ENCODE measurements at regions of chr9 and their contacts with region 1.

Region 1: GRCh38 chr9:95201206-95201605 is 116.3 kb downstream of the FANCC start:
- DNase-seq: no peak
- H3K4me3 Mint-ChIP-seq: no peak overlapping the region
- H3K27ac Mint-ChIP-seq: peak overlapping the region; percentile 23
- H3K4me1 Mint-ChIP-seq: peaks cover 22% of the 10 kb centered on the region
- H3K27me3 Mint-ChIP-seq: no peaks in the 10 kb centered on the region

Region 2: DNA sequence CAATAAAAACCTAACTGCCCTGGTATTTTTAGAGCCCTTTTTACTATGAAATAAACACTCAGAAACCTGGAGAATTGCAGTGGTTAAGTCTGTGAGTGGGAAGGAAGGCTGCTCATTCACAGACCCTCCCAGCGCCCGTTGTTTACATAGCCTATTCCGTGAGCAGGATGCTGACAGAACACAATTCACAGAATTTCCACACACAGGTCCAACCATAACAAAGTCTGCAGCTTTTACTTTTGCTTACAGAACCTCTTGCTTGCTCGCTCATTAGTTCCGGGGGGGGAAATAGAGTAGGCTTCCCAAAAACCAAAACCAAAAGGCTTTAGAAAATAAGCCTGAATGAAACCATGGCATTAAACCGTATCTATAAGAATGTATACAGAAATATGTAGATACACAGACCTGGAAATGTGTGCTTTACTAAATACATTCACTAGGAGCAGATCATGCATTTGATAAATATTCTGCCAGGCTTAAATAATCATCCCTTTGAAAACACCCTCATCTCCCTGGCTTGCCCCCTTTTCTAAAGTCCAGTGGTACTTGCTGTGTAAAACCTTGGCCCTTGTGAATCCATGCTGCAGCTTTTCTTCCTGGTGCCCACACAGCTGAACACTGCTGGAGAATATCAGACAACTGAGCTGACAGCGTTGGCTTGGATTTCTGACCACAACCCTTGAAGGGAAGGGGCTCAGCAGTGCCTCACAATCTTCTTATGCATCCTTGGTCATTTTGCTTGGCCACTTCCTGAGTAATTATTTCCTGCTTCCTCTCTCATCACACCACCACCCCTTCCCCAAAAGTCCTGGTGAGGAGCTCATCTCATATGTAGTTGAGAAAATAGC is 11.7 kb before region 1 on chr9:
- intact Hi-C with region 1: loop called (anchors 1 kb)
- DNase-seq: peak; percentile 49
- H3K4me3 Mint-ChIP-seq: peak overlapping the region; percentile 67
- H3K27ac Mint-ChIP-seq: peak overlapping the region; percentile 83
- H3K4me1 Mint-ChIP-seq: peaks cover 51% of the 10 kb centered on the region
- H3K27me3 Mint-ChIP-seq: no peaks in the 10 kb centered on the region